ENCODE measurements at regions of chr21 and their contacts with region 1.

Region 1: DNA sequence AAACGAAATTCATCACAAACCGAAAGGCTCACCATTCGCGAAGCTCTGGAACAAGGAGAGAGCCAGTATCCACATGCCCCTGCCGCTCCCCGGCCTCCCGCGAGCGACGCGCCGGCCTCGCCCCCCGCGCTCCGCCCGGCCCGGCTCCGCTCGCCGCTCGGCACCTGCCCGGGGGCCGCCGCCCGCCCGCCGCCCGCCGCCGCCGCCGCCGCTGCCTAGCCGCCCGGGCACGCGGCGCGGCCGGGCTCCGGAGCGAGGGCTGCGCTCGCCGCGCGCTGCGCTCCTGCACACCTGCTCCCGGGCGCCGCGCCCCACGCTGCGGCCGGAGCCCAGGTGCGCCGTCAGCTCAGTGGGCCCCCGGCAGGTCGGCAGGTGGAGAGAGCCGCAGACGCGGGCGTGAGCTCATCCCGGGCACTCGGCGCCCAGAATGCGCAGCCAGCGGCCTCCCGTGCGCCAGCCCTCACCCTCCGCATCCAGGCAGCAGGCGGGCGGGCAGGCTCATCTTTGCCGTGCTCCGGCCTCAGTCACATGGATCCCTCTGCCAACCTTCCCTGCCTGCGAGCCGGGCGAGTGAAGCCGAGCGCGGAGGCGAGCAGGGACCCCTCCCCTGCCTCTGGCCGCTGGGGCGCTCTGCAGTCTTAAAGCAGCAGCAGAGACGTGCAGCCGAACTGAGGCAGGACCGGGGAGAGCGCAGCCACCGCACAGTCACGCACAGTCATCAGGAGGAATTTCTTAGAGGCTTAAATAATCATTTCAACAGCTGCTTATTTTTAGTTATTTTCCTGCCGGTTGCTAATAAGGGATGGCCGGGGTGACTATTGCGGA is at the start of gene DSCAM:
- DNase-seq: peak; percentile 50
- H3K4me3 ChIP-seq: peak within 1 kb of the TSS; percentile 47 to 78 (median 52)
- H3K27ac ChIP-seq: peak within 1 kb of the TSS; percentile 97
- H3K4me1 ChIP-seq: peaks cover 53% of the 10 kb centered on the region
- H3K27me3 ChIP-seq: no peaks in the 10 kb centered on the region
- CTCF ChIP-seq: no peak
- total RNA-seq, gene DSCAM: 4.7 to 8.1 TPM

Region 2: DNA sequence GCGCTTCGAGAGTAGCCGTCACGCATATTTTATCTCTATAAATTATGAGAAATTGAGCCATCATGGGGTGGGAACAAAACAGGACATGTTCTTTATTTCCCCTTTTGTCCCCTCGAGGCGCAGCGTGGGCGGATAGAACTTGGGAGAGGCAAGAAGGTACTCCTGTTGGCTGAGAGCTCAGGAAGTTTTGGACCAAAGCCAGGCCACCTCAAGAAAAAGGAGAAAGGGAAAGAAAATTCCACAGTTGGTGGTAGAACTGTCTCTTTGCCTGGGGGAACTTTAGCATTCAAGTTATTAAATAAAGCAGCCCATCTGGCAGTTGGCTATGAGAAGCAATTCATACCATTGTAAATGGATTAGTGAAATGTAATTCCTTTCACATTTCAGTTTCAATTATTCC is 76.6 kb after region 1 on chr21:
- CTCF ChIA-PET with region 1: no interaction called
- dilution Hi-C with region 1: no loop called
- in situ Hi-C with region 1: no loop called
- intact Hi-C with region 1: loop called (anchors 5 kb)
- DNase-seq: peak; percentile 66
- H3K4me3 ChIP-seq: peak overlapping the region in 1 of 3 experiments; percentile 16
- H3K27ac ChIP-seq: peak overlapping the region; percentile 60
- H3K4me1 ChIP-seq: peaks cover 22% of the 10 kb centered on the region
- H3K27me3 ChIP-seq: no peaks in the 10 kb centered on the region
- CTCF ChIP-seq: no peak